ENCODE measurements at regions of chr10 and their contacts with region 1.

Region 1: DNA sequence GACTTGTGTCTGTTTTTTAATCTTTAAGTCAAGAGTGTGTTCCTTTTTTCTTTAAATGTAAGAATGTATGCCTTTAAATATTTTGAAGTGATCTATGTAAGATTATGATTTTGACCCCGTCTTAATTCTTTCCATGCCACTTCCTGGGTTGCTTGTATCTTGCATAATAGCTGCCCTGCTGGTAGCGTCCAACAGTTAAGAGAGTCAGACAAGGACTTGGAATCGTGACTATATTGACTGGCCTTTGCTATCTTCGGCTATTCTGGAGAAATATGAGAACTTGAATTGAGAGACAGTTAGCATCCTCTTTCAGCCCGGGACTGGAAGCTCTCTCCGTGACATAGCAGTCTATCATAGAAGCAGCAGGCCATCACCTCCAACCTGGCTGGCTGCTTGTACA is 13.0 kb downstream of the NRP1 start:
- DNase-seq: no peak
- H3K4me3 ChIP-seq: no peak overlapping the region
- H3K27ac ChIP-seq: no peak overlapping the region
- H3K4me1 ChIP-seq: peaks cover 14% of the 10 kb centered on the region
- H3K27me3 ChIP-seq: no peaks in the 10 kb centered on the region
- CTCF ChIP-seq: no peak
- POLR2A ChIP-seq: no peak

Region 2: DNA sequence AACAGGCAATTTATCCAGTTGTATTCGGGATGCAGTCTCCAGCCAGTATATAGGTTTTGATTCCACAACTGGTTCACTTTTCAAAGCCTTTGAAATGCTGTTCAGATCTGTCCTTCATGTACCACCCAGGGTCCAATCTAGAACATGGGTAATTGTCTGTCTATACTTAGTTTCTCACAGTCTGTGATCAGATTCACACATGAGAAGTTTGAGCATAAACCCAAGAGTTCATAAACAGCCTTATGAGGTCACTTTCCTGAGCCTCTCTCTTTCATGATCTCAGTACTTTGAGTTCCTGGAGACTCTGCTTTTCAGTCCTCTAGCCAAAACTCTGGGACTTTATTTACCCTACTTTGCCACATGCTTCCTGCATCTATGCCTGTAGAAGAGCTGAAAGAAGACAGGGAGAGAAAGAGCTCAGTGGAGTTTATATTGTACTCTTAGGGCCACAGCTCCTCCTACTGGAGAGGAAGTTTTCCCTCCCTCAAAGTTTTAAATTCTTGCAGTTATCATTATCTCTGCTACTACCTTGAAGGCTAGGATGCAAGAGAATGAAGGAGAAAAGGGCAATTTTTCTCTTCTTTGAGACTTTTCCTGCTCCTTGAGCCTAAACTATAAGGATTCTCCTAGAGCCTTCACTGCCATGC is 1830.5 kb before region 1 on chr10:
- intact Hi-C with region 1: loop called (anchors 5 kb)
- DNase-seq: no peak
- H3K4me3 ChIP-seq: no peak overlapping the region
- H3K27ac ChIP-seq: no peak overlapping the region
- H3K4me1 ChIP-seq: no peaks in the 10 kb centered on the region
- H3K27me3 ChIP-seq: no peaks in the 10 kb centered on the region
- CTCF ChIP-seq: peak in 2 of 3 experiments; percentile 23 to 26
- POLR2A ChIP-seq: no peak